CD4-positive, alpha-beta T cell (primary cell): ENCODE measurements at regions of chr6 and their contacts with region 1.

Region 1: DNA sequence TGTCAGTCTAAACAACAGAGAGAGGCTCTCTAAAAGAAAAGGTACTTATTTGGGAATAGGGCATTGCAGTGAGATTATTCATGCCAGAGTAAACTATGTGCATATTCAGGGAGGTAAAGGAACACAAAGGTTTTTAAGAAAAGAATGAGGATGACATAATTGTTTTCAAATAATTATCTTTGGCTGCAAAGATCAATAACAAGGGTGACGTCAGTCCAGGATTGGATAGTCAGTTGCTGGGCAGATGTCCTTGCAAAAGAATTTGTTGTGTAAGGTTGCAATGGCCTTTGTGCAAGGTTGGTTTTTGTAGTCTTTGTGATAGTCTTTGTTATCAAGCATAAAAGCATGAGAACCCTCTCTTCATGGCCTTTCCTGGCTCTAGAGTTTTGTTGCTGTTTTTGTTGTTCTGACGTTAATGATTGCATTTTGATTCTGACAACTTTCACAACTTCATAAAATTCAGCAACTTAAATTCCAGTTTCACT is 17.7 kb downstream of the LOC128125822 start:
- DNase-seq: no peak
- ATAC-seq: no peak
- H3K4me3 ChIP-seq: no peak overlapping the region
- H3K4me3 Mint-ChIP-seq: no peak overlapping the region
- H3K27ac ChIP-seq: no peak overlapping the region
- H3K27ac Mint-ChIP-seq: no peak overlapping the region
- H3K4me1 ChIP-seq: no peaks in the 10 kb centered on the region
- H3K4me1 Mint-ChIP-seq: no peaks in the 10 kb centered on the region
- H3K27me3 ChIP-seq: no peaks in the 10 kb centered on the region
- H3K27me3 Mint-ChIP-seq: peaks cover 12% of the 10 kb centered on the region
- CTCF ChIP-seq: no peak

Region 2: DNA sequence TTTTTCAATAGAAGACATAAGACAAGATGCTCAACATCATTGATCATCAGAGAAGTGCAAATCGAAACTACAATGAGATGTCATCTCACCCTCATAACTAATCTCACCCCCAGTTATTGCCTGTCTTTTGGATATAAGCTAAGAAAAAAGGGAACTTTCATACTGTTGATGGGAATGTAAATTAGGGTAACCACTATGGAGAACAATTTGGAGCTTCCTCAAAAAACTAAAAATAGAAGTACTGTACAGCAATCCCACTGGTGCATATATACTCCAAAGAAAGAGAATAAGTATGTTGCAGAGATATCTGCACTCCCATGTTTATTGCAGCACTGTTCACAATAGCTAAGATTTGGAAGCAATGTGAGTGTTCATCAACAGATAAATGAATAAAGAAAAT is 19.3 kb after region 1 on chr6:
- CTCF ChIA-PET with region 1: no interaction called
- POLR2A ChIA-PET with region 1: no interaction called
- intact Hi-C with region 1: no loop called
- DNase-seq: no peak
- ATAC-seq: no peak
- H3K4me3 ChIP-seq: no peak overlapping the region
- H3K4me3 Mint-ChIP-seq: no peak overlapping the region
- H3K27ac ChIP-seq: no peak overlapping the region
- H3K27ac Mint-ChIP-seq: no peak overlapping the region
- H3K4me1 ChIP-seq: no peaks in the 10 kb centered on the region
- H3K4me1 Mint-ChIP-seq: no peaks in the 10 kb centered on the region
- H3K27me3 ChIP-seq: no peaks in the 10 kb centered on the region
- H3K27me3 Mint-ChIP-seq: peaks cover 4% of the 10 kb centered on the region
- CTCF ChIP-seq: no peak

Region 3: GRCh38 chr6:63705707-63706106 is 115.7 kb after region 1 on chr6:
- CTCF ChIA-PET with region 1: no interaction called
- POLR2A ChIA-PET with region 1: no interaction called
- intact Hi-C with region 1: loop called in 1 of 2 experiments (anchors 5 kb)
- DNase-seq: no peak
- ATAC-seq: no peak
- H3K4me3 ChIP-seq: no peak overlapping the region
- H3K4me3 Mint-ChIP-seq: no peak overlapping the region
- H3K27ac ChIP-seq: no peak overlapping the region
- H3K27ac Mint-ChIP-seq: peak overlapping the region; percentile 27
- H3K4me1 ChIP-seq: no peaks in the 10 kb centered on the region
- H3K4me1 Mint-ChIP-seq: no peaks in the 10 kb centered on the region
- H3K27me3 ChIP-seq: no peaks in the 10 kb centered on the region
- H3K27me3 Mint-ChIP-seq: no peaks in the 10 kb centered on the region
- CTCF ChIP-seq: no peak